HepG2 (cell line): ENCODE measurements at regions of chr6 and their contacts with region 1.

Region 1: GRCh38 chr6:96468681-96469224 is 52.9 kb upstream of the UFL1 start:
- DNase-seq: no peak
- ATAC-seq: no peak
- H3K4me3 ChIP-seq: no peak overlapping the region
- H3K27ac ChIP-seq: no peak overlapping the region
- H3K4me1 ChIP-seq: no peaks in the 10 kb centered on the region
- H3K27me3 ChIP-seq: no peaks in the 10 kb centered on the region
- CTCF ChIP-seq: no peak
- EP300 ChIP-seq: no peak
- POLR2A ChIP-seq: no peak
- RAD21 ChIP-seq: no peak

Region 2: GRCh38 chr6:95364016-95364604 is 1104.6 kb before region 1 on chr6:
- CTCF ChIA-PET with region 1: no interaction called
- POLR2A ChIA-PET with region 1: no interaction called
- in situ Hi-C with region 1: no loop called
- intact Hi-C with region 1: loop called (anchors 5 kb)
- DNase-seq: peak; percentile 20
- ATAC-seq: 0 out of 3 replicates have a peak, but pooled peaks have one; percentile 46
- H3K4me3 ChIP-seq: no peak overlapping the region
- H3K27ac ChIP-seq: no peak overlapping the region
- H3K4me1 ChIP-seq: no peaks in the 10 kb centered on the region
- H3K27me3 ChIP-seq: no peaks in the 10 kb centered on the region
- CTCF ChIP-seq: no peak
- EP300 ChIP-seq: no peak
- POLR2A ChIP-seq: no peak
- RAD21 ChIP-seq: no peak

Region 3: GRCh38 chr6:95431637-95432228 is 1037.0 kb before region 1 on chr6:
- CTCF ChIA-PET with region 1: no interaction called
- POLR2A ChIA-PET with region 1: no interaction called
- in situ Hi-C with region 1: no loop called
- intact Hi-C with region 1: loop called (anchors 5 kb)
- DNase-seq: peak; percentile 9
- ATAC-seq: no peak
- H3K4me3 ChIP-seq: no peak overlapping the region
- H3K27ac ChIP-seq: no peak overlapping the region
- H3K4me1 ChIP-seq: no peaks in the 10 kb centered on the region
- H3K27me3 ChIP-seq: no peaks in the 10 kb centered on the region
- CTCF ChIP-seq: peak; percentile 59
- EP300 ChIP-seq: no peak
- POLR2A ChIP-seq: no peak
- RAD21 ChIP-seq: no peak

Region 4: DNA sequence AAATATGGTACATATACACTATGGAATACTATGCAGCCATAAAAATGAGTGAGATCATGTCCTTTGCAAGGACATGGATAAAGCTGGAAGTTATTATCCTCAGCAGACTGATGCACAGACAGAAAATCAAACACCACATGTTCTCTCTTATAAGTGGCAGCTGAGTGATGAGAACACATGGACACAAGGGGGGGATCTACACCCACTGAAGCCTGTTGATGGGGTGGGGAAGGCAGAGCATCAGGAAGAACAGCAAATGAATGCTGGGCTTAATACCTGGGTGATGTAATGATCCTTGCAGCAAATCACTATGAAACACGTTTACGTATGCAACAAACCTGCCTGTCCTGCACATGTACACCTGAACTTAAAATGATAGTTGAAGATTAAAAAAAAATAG is 820.1 kb before region 1 on chr6:
- CTCF ChIA-PET with region 1: no interaction called
- POLR2A ChIA-PET with region 1: no interaction called
- in situ Hi-C with region 1: no loop called
- intact Hi-C with region 1: loop called (anchors 2 kb)
- DNase-seq: peak; percentile 46
- ATAC-seq: peak; percentile 90
- H3K4me3 ChIP-seq: no peak overlapping the region
- H3K27ac ChIP-seq: no peak overlapping the region
- H3K4me1 ChIP-seq: no peaks in the 10 kb centered on the region
- H3K27me3 ChIP-seq: no peaks in the 10 kb centered on the region
- CTCF ChIP-seq: peak; percentile 74
- EP300 ChIP-seq: no peak
- POLR2A ChIP-seq: no peak
- RAD21 ChIP-seq: peak; percentile 41; the same call in 1 of the 2 replicates